Esophagus muscularis mucosa (tissue), 4 donors: ENCODE measurements at regions of chr15 and their contacts with region 1.

Region 1: GRCh38 chr15:89243691-89244471 is at the start of gene FANCI:
- DNase-seq: peak; percentile 97
- H3K4me3 ChIP-seq: peak within 1 kb of the TSS; percentile 61 to 86 (median 74)
- H3K27ac ChIP-seq: peak within 1 kb of the TSS; percentile 54 to 71 (median 60)
- H3K4me1 ChIP-seq: peaks cover 16 to 21% (median 17%) of the 10 kb centered on the region in 4 donors
- H3K27me3 ChIP-seq: no peaks in the 10 kb centered on the region
- CTCF ChIP-seq: peak; percentile 46 to 59 (median 51)
- EP300 ChIP-seq: no peak
- POLR2A ChIP-seq: no peak
- total RNA-seq, gene FANCI: 3.5 to 10.2 (median 4.0) TPM

Region 2: DNA sequence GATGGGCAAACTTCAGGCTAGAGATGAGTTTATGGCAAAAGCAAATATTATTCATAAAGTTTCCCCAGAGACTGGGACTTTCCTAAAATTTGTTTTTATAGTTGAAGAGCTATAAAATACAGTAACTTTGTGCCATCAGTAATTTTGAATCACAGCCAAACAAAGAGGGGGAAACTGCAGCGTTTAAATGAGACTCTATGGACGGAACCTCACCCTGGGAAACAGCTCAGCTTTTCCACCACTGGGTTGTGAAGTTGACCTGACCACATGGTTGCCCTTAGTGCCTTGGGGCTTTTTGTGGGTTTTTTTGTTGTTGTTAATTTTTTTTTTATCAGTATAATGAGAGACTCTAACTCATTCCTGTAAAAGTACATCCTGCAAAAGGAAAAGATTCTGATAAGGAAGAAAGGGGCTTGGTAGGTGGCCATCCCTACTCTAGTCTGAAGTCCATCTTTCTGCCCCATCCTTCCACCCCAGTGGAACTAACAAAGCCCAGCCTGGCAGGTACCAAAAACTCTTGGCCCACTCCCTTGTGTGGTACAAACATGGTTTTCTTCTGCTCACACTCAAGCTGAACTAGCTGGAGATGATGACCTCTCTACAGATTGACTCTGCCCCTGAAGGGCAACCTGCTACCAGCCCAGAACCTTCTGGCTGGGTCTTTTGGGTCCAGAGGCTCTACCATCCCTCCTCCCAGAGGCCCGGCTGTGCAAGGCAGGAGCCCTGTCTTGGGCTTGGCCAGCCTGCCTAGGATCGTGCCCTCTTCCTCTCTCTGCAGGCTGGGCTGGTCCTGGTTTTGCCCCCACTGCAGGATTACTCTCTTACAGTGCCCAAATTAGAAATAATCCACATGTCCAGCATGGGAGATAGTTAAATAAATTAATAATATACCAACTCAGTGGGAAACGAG is 63.7 kb before region 1 on chr15:
- intact Hi-C with region 1: no loop called
- DNase-seq: no peak
- H3K4me3 ChIP-seq: no peak overlapping the region
- H3K27ac ChIP-seq: no peak overlapping the region
- H3K4me1 ChIP-seq: peaks cover 8 to 27% (median 9%) of the 10 kb centered on the region in 4 donors
- H3K27me3 ChIP-seq: no peaks in the 10 kb centered on the region
- CTCF ChIP-seq: no peak
- EP300 ChIP-seq: no peak
- POLR2A ChIP-seq: no peak

Region 3: GRCh38 chr15:89334510-89335288 is 90.8 kb after region 1 on chr15 and contains the start of gene POLG:
- intact Hi-C with region 1: loop called (anchors 5 kb)
- DNase-seq: peak; percentile 100
- H3K4me3 ChIP-seq: peak within 1 kb of the TSS; percentile 70 to 94 (median 86)
- H3K27ac ChIP-seq: peak within 1 kb of the TSS; percentile 88 to 96 (median 94)
- H3K4me1 ChIP-seq: peaks cover 47 to 58% (median 53%) of the 10 kb centered on the region in 4 donors
- H3K27me3 ChIP-seq: no peaks in the 10 kb centered on the region
- CTCF ChIP-seq: no peak
- EP300 ChIP-seq: no peak
- POLR2A ChIP-seq: peak; percentile 84
- total RNA-seq, gene POLG: 51.0 to 86.0 (median 66.7) TPM